HepG2 (cell line): ENCODE measurements at regions of chr11 and their contacts with region 1.

Region 1: DNA sequence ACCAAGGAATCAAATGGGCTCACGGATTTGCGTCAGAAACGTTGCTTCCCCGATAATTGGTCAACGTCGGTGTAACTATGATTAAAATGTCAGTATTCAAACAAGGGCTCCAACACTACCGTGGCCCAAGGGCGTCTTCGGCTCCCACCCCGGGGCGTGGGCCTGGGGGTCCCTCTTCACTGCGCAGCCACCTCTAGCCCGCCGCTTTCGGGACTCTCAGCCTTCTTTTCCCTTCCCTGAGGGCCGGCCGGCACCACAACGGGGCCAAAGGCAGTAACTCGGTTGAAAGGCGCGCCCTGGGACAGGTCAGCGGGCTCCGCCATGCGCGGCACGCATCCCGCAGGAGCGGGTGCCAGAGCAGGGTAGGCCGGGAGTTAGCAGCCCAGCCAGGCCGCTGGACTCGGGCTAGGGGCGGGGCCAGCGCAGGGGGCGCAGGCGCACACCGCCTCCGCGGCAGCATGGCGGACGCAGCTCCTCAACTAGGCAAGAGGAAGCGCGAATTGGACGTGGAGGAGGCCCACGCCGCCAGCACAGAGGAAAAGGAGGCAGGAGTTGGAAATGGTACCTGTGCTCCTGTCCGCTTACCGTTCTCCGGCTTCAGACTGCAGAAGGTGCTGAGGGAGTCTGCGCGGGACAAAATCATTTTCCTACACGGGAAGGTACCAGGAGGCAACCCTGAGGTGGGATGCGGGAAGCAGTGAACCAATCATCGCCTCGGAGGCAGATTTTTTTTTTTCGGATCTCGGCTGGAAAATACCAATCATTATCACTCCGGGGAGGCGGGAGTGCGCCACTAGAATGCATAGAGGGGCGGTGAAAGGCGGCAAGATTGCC is at the start of gene DCPS:
- DNase-seq: peak; percentile 75
- ATAC-seq: peak; percentile 99
- H3K4me3 ChIP-seq: peak within 1 kb of the TSS; percentile 72 to 88 (median 78)
- H3K27ac ChIP-seq: peak within 1 kb of the TSS; percentile 86
- H3K4me1 ChIP-seq: peaks cover 20% of the 10 kb centered on the region
- H3K27me3 ChIP-seq: no peaks in the 10 kb centered on the region
- CTCF ChIP-seq: peak; percentile 17; the same call in 1 of the 2 replicates
- EP300 ChIP-seq: no peak
- POLR2A ChIP-seq: peak; percentile 94 to 96
- RAD21 ChIP-seq: no peak
- total RNA-seq, gene DCPS: 21.9 and 24.1 TPM in 2 replicates

Region 2: GRCh38 chr11:126282736-126283591 is 20.9 kb before region 1 on chr11 and contains the start of gene TIRAP:
- CTCF ChIA-PET with region 1: no interaction called
- POLR2A ChIA-PET with region 1: interaction called, 9 read pairs
- in situ Hi-C with region 1: no loop called
- intact Hi-C with region 1: loop called (anchors 1 kb)
- DNase-seq: peak; percentile 43
- ATAC-seq: peak; percentile 88
- H3K4me3 ChIP-seq: peak within 1 kb of the TSS; percentile 87 to 96 (median 95)
- H3K27ac ChIP-seq: peak within 1 kb of the TSS; percentile 85
- H3K4me1 ChIP-seq: peaks cover 37% of the 10 kb centered on the region
- H3K27me3 ChIP-seq: no peaks in the 10 kb centered on the region
- CTCF ChIP-seq: no peak; the same call in 1 of the 2 replicates
- EP300 ChIP-seq: no peak
- POLR2A ChIP-seq: peak; percentile 33 to 93; a peak in 3 of 4 replicates
- RAD21 ChIP-seq: no peak
- total RNA-seq, gene TIRAP: 5.4 and 6.2 TPM in 2 replicates

Region 3: GRCh38 chr11:126355324-126355925 is 51.6 kb after region 1 on chr11 and contains the start of gene ST3GAL4:
- CTCF ChIA-PET with region 1: no interaction called
- POLR2A ChIA-PET with region 1: interaction called, 24 read pairs
- in situ Hi-C with region 1: no loop called
- intact Hi-C with region 1: no loop called
- DNase-seq: peak; percentile 68
- ATAC-seq: peak; percentile 69
- H3K4me3 ChIP-seq: peak within 1 kb of the TSS; percentile 86 to 97 (median 86)
- H3K27ac ChIP-seq: peak within 1 kb of the TSS; percentile 77
- H3K4me1 ChIP-seq: peaks cover 43% of the 10 kb centered on the region
- H3K27me3 ChIP-seq: no peaks in the 10 kb centered on the region; a peak in 1 of 5 replicates
- CTCF ChIP-seq: no peak
- EP300 ChIP-seq: no peak
- POLR2A ChIP-seq: peak in 1 of 2 experiments; percentile 64; a peak in 2 of 4 replicates
- RAD21 ChIP-seq: no peak
- total RNA-seq, gene ST3GAL4: 7.4 and 13.3 TPM in 2 replicates

Region 4: DNA sequence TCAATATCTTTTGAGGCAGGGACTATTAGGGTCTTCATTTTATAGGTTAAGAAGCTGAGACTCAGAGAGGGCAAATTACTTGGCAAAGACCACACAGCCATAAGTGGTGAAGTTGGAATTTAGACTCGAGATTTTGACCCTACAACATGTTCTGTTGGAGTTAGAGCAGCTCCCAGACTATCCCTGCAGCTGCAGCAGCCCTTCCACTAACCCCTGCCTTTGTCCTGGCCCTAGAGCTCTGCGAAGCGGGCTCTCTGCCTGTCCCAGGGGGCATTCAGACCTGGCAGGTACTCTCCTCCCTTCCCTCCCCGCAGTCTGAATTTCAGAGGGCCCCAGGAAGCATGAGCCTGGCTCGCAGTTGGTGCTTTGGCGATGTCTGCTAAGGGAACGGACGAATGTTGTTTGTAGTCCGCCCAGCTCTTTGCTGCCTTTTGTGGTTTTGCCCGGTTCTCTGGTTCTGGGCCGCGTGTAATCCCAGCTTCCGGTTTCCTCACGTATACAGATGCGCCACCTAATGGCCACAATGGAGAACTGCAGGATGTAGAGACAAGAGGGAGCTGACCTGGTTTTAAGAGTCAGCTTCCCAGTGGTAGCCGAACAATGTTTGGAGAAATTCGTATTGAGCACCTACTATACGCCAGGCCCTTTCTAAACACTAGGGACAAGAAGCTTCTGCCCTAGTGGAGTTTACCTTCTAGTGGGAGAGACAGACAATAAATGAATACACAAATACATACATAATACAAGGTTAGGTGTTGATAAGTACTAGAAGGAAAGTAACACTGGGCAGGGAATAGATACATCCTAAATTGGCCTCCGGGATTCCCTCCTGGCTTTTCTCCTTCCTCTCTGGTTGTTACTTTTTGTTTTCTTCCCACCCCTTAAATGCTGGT is 176.8 kb after region 1 on chr11:
- CTCF ChIA-PET with region 1: no interaction called
- POLR2A ChIA-PET with region 1: interaction called, 4 read pairs
- in situ Hi-C with region 1: loop called (anchors 10 kb)
- intact Hi-C with region 1: no loop called
- DNase-seq: peak; percentile 74
- ATAC-seq: peak; percentile 82
- H3K4me3 ChIP-seq: peak overlapping the region in 2 of 3 experiments; percentile 27 to 53; a peak in 2 of 6 replicates
- H3K27ac ChIP-seq: no peak overlapping the region
- H3K4me1 ChIP-seq: peaks cover 8% of the 10 kb centered on the region
- H3K27me3 ChIP-seq: peaks cover 4 to 44% of the 10 kb centered on the region in 2 experiments; a peak in 4 of 5 replicates
- CTCF ChIP-seq: peak; percentile 90
- EP300 ChIP-seq: no peak
- POLR2A ChIP-seq: no peak
- RAD21 ChIP-seq: peak; percentile 58